Activated naive CD4-positive, alpha-beta T cell treated with anti-CD3 and anti-CD28 coated beads for 36 hours (primary cell): ENCODE measurements at regions of chr11 and their contacts with region 1.

Region 1: GRCh38 chr11:61187505-61188130 is 15.7 kb upstream of the PGA3 start:
- DNase-seq: peak; percentile 90
- H3K4me3 Mint-ChIP-seq: no peak overlapping the region
- H3K27ac Mint-ChIP-seq: no peak overlapping the region
- H3K4me1 Mint-ChIP-seq: peaks cover 2% of the 10 kb centered on the region
- H3K27me3 Mint-ChIP-seq: no peaks in the 10 kb centered on the region

Region 2: GRCh38 chr11:60563553-60564235 is 623.9 kb before region 1 on chr11:
- CTCF ChIA-PET with region 1: no interaction called
- intact Hi-C with region 1: no loop called
- DNase-seq: peak; percentile 47
- H3K4me3 Mint-ChIP-seq: no peak overlapping the region
- H3K27ac Mint-ChIP-seq: peak overlapping the region; percentile 74
- H3K4me1 Mint-ChIP-seq: peaks cover 2% of the 10 kb centered on the region
- H3K27me3 Mint-ChIP-seq: peaks cover 4% of the 10 kb centered on the region

Region 3: DNA sequence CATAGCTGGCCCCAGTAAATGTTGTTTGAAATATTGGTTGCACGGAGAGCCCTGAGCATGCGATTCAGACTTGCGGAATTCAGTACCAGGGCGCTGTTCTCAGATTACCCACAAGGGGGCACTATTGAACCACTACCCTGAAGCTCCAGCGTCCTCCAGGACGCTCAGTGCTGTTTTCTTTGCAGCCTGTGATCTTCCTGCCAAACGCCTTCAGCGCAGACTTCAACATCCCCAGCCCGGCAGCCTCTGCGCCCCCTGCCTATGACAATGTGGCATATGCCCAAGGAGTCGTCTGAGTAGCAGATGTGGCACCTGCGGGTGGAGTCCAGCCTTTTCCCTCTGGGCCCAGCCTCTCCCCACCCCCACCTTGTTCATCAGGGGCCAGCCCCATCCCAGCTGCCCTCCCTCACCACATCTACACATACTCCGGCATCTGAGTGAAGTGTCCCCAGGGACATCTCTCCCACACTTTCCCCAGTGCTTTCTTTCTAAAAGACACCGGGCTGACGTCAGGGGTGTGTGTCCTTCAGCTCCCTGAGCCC is 412.1 kb before region 1 on chr11:
- CTCF ChIA-PET with region 1: interaction called, 12 read pairs
- intact Hi-C with region 1: loop called (anchors 1 kb)
- DNase-seq: peak; percentile 93
- H3K4me3 Mint-ChIP-seq: no peak overlapping the region
- H3K27ac Mint-ChIP-seq: no peak overlapping the region
- H3K4me1 Mint-ChIP-seq: peaks cover 7% of the 10 kb centered on the region
- H3K27me3 Mint-ChIP-seq: no peaks in the 10 kb centered on the region

Region 4: GRCh38 chr11:60913793-60914632 is 273.6 kb before region 1 on chr11 and contains the start of gene TMEM109:
- CTCF ChIA-PET with region 1: interaction called, 21 read pairs
- intact Hi-C with region 1: loop called (anchors 1 kb)
- DNase-seq: peak; percentile 89
- H3K4me3 Mint-ChIP-seq: peak within 1 kb of the TSS; percentile 94
- H3K27ac Mint-ChIP-seq: peak within 1 kb of the TSS; percentile 95
- H3K4me1 Mint-ChIP-seq: peaks cover 62% of the 10 kb centered on the region
- H3K27me3 Mint-ChIP-seq: no peaks in the 10 kb centered on the region
- total RNA-seq, gene TMEM109: 94.0 to 103 TPM

Region 5: DNA sequence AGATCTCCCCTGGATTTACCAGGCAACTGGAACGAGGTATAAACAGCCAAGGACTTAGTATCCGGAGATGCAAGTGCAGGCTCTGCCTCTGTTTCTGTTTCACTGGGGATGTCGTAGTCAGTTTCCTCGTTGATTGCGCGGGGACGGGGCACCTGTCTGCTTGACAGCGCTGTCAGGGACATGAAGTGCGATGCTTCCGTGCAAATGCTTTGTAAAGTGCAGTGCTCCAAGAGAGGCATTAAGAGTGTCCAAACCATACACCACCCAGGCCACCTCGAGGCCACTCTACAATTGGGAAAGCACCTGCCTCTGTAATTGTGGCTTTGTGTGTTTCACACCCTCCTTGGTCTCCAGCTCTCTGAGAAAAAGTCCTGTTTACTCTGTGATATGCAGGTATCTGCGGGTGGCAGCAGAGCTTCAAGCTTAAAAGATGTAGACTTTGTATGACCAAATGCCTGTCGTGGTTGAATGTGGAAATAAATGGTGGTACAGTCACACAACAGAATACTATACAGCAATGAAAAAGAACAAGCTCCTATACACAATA is 103.9 kb before region 1 on chr11:
- CTCF ChIA-PET with region 1: interaction called, 4 read pairs
- intact Hi-C with region 1: loop called (anchors 2 kb)
- DNase-seq: peak; percentile 89
- H3K4me3 Mint-ChIP-seq: peak overlapping the region; percentile 76
- H3K27ac Mint-ChIP-seq: peak overlapping the region; percentile 99
- H3K4me1 Mint-ChIP-seq: peaks cover 70% of the 10 kb centered on the region
- H3K27me3 Mint-ChIP-seq: no peaks in the 10 kb centered on the region

Region 6: GRCh38 chr11:61161190-61162091 is 26.2 kb before region 1 on chr11 and contains the start of gene VPS37C:
- CTCF ChIA-PET with region 1: interaction called, 10 read pairs
- intact Hi-C with region 1: loop called (anchors 1 kb)
- DNase-seq: peak; percentile 91
- H3K4me3 Mint-ChIP-seq: peak within 1 kb of the TSS; percentile 94
- H3K27ac Mint-ChIP-seq: peak within 1 kb of the TSS; percentile 93
- H3K4me1 Mint-ChIP-seq: peaks cover 62% of the 10 kb centered on the region
- H3K27me3 Mint-ChIP-seq: no peaks in the 10 kb centered on the region
- total RNA-seq, gene VPS37C: 8.5 to 8.9 TPM

Region 7: DNA sequence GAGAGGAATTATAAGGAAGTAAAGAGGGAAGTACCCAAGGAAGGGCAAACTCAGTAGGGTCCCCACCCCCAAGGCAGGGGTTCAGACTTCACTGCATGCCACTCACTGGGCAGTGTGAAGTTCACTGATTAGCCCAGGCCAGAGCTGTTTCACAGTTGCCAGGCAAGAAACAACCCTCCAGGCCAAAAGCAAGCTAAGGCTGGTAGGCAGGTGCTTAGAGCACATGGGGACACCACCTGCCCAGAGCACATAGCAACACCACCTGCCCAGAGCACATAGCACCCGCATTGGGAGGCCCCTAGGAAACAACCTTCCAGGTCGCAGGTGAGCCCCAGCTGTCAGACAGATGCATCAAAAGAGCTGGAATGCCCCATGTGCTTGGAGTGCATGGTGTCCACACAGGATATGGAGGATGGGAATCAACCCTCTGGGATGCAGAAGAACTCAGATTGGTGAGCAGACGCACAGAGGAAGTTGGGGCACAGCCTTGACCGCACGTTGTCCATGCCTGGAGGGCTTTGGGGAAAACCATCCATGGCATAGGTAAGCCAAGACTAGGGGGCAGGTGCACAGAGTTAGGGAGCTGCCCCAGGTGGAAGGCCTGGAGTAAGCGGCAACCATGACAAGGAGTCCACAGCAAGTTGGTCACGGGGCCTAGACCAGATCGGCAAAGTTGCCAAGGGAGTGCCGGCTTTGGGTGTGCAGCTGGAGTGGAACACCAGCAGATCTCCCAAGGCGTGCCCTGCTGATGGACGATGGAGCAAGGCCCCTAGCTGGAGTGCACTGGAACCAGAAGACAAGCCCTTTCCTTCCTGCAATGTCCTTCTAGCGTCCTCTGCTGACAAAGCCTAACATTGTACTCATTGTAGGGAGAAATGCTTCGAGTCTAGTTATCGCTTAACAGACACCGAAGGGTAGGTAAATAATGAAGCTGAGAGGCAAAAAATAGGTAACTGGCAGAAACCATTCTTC is 196.9 kb after region 1 on chr11:
- CTCF ChIA-PET with region 1: no interaction called
- intact Hi-C with region 1: loop called (anchors 10 kb)
- DNase-seq: no peak
- H3K4me3 Mint-ChIP-seq: no peak overlapping the region
- H3K27ac Mint-ChIP-seq: no peak overlapping the region
- H3K4me1 Mint-ChIP-seq: peaks cover 3% of the 10 kb centered on the region
- H3K27me3 Mint-ChIP-seq: no peaks in the 10 kb centered on the region

Region 8: GRCh38 chr11:61627567-61628445 is 440.2 kb after region 1 on chr11:
- CTCF ChIA-PET with region 1: no interaction called
- intact Hi-C with region 1: no loop called
- DNase-seq: peak; percentile 68
- H3K4me3 Mint-ChIP-seq: no peak overlapping the region
- H3K27ac Mint-ChIP-seq: no peak overlapping the region
- H3K4me1 Mint-ChIP-seq: no peaks in the 10 kb centered on the region
- H3K27me3 Mint-ChIP-seq: peaks cover 2% of the 10 kb centered on the region

Region 9: GRCh38 chr11:61971248-61972111 is 783.9 kb after region 1 on chr11:
- CTCF ChIA-PET with region 1: no interaction called
- intact Hi-C with region 1: no loop called
- DNase-seq: peak; percentile 86
- H3K4me3 Mint-ChIP-seq: peak overlapping the region; percentile 10
- H3K27ac Mint-ChIP-seq: peak overlapping the region; percentile 92
- H3K4me1 Mint-ChIP-seq: peaks cover 54% of the 10 kb centered on the region
- H3K27me3 Mint-ChIP-seq: no peaks in the 10 kb centered on the region

Region 10: GRCh38 chr11:62245271-62245753 is 1057.7 kb after region 1 on chr11:
- CTCF ChIA-PET with region 1: no interaction called
- intact Hi-C with region 1: no loop called
- DNase-seq: peak; percentile 70
- H3K4me3 Mint-ChIP-seq: no peak overlapping the region
- H3K27ac Mint-ChIP-seq: no peak overlapping the region
- H3K4me1 Mint-ChIP-seq: no peaks in the 10 kb centered on the region
- H3K27me3 Mint-ChIP-seq: peaks cover 23% of the 10 kb centered on the region